MCF 10A (cell line): ENCODE measurements at regions of chr11 and their contacts with region 1.

Region 1: GRCh38 chr11:61816736-61817455 is at the start of gene FADS1:
- DNase-seq: peak; percentile 85
- H3K4me3 Mint-ChIP-seq: peak within 1 kb of the TSS; percentile 93
- H3K27ac Mint-ChIP-seq: peak within 1 kb of the TSS; percentile 93
- H3K4me1 Mint-ChIP-seq: peaks cover 34% of the 10 kb centered on the region
- H3K27me3 Mint-ChIP-seq: no peaks in the 10 kb centered on the region
- CTCF ChIP-seq: peak; percentile 50
- total RNA-seq, gene FADS1: 24.2 and 27.5 TPM in 2 replicates

Region 2: GRCh38 chr11:61783717-61784519 is 33.0 kb before region 1 on chr11:
- CTCF ChIA-PET with region 1: no interaction called
- POLR2A ChIA-PET with region 1: no interaction called
- intact Hi-C with region 1: no loop called
- DNase-seq: no peak
- H3K4me3 Mint-ChIP-seq: no peak overlapping the region
- H3K27ac Mint-ChIP-seq: no peak overlapping the region
- H3K4me1 Mint-ChIP-seq: no peaks in the 10 kb centered on the region
- H3K27me3 Mint-ChIP-seq: no peaks in the 10 kb centered on the region
- CTCF ChIP-seq: no peak

Region 3: DNA sequence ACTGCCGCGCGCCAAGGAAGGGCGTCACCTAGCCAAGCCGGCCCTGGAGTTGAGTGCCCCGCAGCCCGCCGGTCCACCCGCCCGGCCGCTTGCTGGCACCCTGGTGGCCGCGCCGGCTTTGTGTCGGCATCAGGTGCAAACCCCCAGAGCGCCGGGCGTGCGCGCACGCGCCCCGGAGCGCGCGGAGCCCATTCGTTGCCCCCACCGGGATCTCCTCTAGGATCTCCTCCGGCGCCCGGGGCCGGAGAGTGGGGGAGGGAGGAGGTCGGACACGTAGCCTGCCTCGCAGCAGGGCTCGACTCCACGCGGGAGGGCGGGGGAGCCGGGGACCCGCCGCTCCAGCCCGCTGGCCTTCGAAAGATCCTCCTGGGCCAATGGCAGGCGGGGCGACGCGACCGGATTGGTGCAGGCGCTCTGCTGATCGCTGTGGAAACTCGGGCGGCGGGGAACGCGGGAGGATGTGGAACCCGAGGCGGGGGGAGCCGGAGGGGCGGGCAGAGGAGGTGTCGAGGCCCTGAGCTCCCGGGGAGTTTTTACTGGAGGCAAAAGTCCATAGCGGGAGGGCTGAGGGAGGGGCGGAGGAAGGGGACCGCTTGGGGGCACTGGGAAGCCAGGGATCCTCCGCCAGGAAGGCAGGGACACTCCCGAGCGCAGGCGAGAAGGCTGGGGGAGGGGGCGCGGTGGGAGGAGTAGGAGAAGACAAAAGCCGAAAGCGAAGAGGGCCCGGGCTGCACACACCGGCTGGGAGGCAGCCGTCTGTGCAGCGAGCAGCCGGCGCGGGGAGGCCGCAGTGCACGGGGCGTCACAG is 10.9 kb after region 1 on chr11 and contains the start of gene FADS2:
- CTCF ChIA-PET with region 1: interaction called, 5 read pairs
- POLR2A ChIA-PET with region 1: interaction called, 27 read pairs
- intact Hi-C with region 1: no loop called
- DNase-seq: peak; percentile 77
- H3K4me3 Mint-ChIP-seq: peak within 1 kb of the TSS; percentile 75
- H3K27ac Mint-ChIP-seq: no peak within 1 kb of the TSS
- H3K4me1 Mint-ChIP-seq: peaks cover 8% of the 10 kb centered on the region
- H3K27me3 Mint-ChIP-seq: no peaks in the 10 kb centered on the region
- CTCF ChIP-seq: no peak
- total RNA-seq, gene FADS2: 7.5 and 20.6 TPM in 2 replicates

Region 4: DNA sequence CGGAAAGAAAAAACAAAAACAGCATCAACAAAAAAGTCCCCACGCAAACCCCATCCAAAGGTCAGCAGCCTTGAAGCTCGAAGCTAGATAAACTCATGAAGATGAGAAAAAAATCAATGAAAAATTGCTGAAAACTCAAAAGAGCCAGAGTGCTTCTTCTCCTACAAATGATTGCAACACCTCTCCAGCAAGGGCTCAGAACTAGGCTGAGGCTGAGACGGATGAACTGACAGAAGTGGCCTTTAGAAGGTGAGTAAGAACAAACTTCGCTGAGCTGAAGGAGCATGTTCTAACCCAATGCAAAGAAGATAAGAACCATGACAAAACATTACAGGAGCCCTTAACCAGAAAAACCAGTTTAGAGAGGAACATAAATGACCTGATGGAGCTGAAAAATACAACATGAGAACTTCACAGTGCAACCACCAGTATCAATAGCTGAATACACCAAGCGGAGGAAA is 169.0 kb after region 1 on chr11:
- CTCF ChIA-PET with region 1: no interaction called
- POLR2A ChIA-PET with region 1: no interaction called
- intact Hi-C with region 1: no loop called
- DNase-seq: no peak
- H3K4me3 Mint-ChIP-seq: no peak overlapping the region
- H3K27ac Mint-ChIP-seq: no peak overlapping the region
- H3K4me1 Mint-ChIP-seq: peaks cover 5% of the 10 kb centered on the region
- H3K27me3 Mint-ChIP-seq: no peaks in the 10 kb centered on the region
- CTCF ChIP-seq: no peak